Left ventricle myocardium superior (tissue), 1 donor: ENCODE measurements at regions of chr16 and their contacts with region 1.

Region 1: GRCh38 chr16:68229431-68230198 is 6.3 kb downstream of the ESRP2 start:
- DNase-seq: no peak
- ATAC-seq: peak; percentile 49

Region 2: DNA sequence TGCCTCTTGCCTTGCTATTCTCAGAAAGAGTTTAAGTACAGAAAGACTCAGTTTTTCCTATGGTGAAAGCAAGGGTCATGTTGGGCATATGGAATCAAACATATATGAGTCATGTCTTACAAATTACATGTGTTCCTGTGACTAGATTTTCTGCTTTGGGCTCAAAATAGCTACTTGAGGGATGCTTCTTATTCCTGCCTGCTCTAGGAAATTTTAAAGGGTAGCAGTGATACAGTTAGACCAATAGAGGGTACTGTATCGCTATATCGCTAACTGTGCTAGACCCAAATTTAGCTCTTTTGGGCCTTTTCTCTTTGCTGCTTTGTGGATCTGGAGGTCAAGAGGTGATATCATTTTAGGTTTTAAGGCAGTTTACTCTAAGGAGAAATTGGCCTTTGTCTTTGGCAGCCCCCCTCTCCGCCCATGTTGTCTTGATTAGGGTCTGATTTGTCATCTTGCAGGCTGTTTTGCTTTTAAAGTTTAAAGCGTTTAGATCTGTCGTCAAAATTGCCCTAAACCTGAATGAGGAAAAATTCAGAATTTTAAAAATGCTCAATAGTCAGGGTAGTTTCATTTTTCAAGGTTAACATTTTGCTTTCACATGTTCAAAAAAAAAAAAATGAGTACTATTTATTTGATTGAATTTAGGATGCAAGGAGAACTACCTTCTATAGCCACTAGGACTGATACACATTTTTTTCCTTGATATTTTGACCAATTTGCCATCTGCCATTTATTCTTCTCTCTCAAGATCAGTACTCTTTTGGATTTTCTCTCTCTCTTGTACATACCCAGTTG is 135.6 kb before region 1 on chr16:
- intact Hi-C with region 1: loop called (anchors 10 kb)
- DNase-seq: no peak
- ATAC-seq: peak; percentile 70